Spleen (tissue), 13 donors: ENCODE measurements at regions of chr1 and their contacts with region 1.

Region 1: DNA sequence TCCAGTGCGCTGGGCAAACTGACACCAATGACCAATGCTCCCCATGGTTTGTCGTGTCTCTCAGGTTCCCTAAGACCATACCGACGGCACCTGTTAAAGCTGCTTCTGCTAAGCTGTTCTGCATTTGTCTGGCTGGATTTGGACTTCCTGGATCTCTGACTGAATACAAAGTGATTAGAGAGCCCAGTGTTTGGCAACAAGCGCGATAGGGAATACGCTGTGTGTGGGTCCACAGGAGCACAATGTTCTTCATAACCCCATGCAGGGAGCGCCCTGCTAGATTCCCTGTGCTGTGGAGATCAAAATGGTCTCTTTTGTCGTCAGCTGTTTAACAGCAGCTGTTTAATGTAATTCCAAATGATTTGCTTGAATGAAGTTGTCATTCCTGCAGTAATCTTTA is 26.0 kb upstream of the ESRRG start:
- DNase-seq: no peak
- H3K4me3 ChIP-seq: no peak overlapping the region
- H3K27ac ChIP-seq: peak overlapping the region in 1 of 8 donors; percentile 15
- H3K4me1 ChIP-seq: peaks cover 0 to 3% (median 0%) of the 10 kb centered on the region in 6 donors
- H3K27me3 ChIP-seq: no peaks in the 10 kb centered on the region
- CTCF ChIP-seq: no peak
- POLR2A ChIP-seq: no peak

Region 2: DNA sequence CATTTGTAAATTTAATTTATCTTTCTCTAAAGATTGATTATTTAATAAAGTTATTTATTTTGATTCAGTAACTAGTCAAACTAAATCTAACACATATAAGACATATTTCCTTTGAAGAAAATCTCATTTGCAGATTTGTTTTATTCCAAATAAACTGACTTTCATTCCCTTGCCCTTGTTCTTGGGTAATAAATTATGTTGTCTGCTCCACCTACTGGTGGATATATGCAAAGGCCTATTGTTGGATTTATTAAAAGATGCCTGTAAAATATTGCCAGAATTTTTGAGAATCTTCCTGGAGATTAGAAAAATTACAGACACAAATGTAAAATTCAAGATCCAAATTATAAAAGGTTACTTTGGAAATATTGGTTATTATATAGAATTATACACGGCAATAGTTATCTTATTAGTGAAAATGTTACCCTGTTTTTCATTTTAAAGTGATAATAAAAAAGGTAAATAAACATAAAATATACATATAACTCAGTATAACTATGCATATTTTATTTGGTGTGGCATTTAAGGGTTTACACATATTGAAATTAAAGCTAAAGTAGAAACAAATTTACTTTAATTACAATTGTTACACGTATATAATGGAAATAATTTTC is 998.0 kb after region 1 on chr1:
- intact Hi-C with region 1: loop called (anchors 5 kb)
- DNase-seq: no peak
- H3K4me3 ChIP-seq: no peak overlapping the region
- H3K27ac ChIP-seq: no peak overlapping the region
- H3K4me1 ChIP-seq: no peaks in the 10 kb centered on the region
- H3K27me3 ChIP-seq: no peaks in the 10 kb centered on the region
- CTCF ChIP-seq: peak in 9 of 11 experiments; percentile 12 to 55 (median 46)
- POLR2A ChIP-seq: no peak